Pancreas (tissue), 10 donors: ENCODE measurements at regions of chr9 and their contacts with region 1.

Region 1: DNA sequence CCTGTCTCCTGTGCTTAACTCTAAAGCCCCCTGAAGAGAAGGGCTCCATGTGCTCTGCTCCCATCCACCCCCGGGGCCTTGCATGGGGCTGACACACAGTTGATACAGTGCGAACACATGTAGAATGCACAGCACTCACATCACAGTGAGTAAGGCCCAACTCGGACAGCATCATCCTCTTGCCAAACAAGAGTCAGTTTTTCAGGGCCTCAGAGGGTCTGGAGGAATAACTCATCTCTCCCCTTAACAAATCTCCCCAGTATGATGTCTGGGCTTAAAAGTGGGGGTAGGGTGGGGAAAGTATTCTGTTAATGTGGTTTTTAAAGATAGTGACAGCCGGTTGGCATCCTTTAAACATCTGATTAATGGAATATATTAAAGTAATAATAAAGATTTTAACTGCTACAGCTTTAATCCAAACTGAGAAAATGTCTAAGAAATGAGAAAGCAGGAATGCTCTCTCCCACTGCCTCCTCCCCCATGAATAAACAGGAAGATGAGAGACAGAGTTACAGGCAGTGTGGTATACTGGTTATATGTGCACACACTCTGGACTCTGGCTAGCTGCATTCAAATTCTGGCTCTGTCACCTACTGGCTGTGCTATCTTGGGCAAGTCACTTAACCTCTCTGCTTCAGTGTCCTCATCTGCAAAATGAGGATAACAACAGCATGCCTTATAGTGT is 22.5 kb downstream of the APBA1 start:
- DNase-seq: no peak
- ATAC-seq: no peak
- H3K4me3 ChIP-seq: no peak overlapping the region
- H3K27ac ChIP-seq: no peak overlapping the region
- H3K4me1 ChIP-seq: peaks cover 3 to 7% (median 4%) of the 10 kb centered on the region in 3 donors
- H3K27me3 ChIP-seq: no peaks in the 10 kb centered on the region
- CTCF ChIP-seq: no peak

Region 2: DNA sequence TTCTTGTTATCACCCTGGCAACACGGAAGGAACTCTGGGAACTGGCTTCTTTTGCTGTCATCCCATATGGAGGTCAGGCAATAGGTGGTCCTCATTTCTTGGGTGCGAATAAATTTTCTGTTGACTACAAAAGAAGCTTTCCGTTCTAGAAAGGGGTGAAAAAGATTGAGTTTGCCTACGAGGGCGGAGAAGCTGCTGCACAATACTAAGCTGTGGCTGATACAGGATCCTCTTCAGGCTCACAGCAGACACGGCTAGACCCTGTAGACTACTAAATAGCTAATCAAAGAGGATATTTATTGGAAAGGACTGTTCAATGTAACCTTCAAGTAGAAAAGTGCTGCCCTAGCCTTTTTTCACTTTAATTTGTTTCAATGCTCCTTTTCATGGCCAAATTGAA is 417.6 kb before region 1 on chr9:
- intact Hi-C with region 1: no loop called
- DNase-seq: no peak
- ATAC-seq: no peak
- H3K4me3 ChIP-seq: no peak overlapping the region
- H3K27ac ChIP-seq: no peak overlapping the region
- H3K4me1 ChIP-seq: no peaks in the 10 kb centered on the region
- H3K27me3 ChIP-seq: no peaks in the 10 kb centered on the region
- CTCF ChIP-seq: no peak

Region 3: GRCh38 chr9:69633716-69634115 is 16.0 kb before region 1 on chr9:
- intact Hi-C with region 1: loop called in 1 of 3 experiments (anchors 2 kb)
- DNase-seq: no peak
- ATAC-seq: no peak
- H3K4me3 ChIP-seq: no peak overlapping the region
- H3K27ac ChIP-seq: no peak overlapping the region
- H3K4me1 ChIP-seq: no peaks in the 10 kb centered on the region
- H3K27me3 ChIP-seq: no peaks in the 10 kb centered on the region
- CTCF ChIP-seq: no peak